K562 (cell line): ENCODE measurements at regions of chr2 and their contacts with region 1.

Region 1: GRCh38 chr2:160109936-160110673 is 47.7 kb upstream of the PLA2R1 start:
- DNase-seq: peak; percentile 50 to 64 (median 61)
- ATAC-seq: peak; percentile 95
- H3K4me3 ChIP-seq: no peak overlapping the region
- H3K27ac ChIP-seq: no peak overlapping the region
- H3K4me1 ChIP-seq: no peaks in the 10 kb centered on the region
- H3K27me3 ChIP-seq: no peaks in the 10 kb centered on the region
- CTCF ChIP-seq: peak; percentile 64 to 85 (median 77)
- EP300 ChIP-seq: no peak
- POLR2A ChIP-seq: no peak
- RAD21 ChIP-seq: peak; percentile 73 to 75

Region 2: DNA sequence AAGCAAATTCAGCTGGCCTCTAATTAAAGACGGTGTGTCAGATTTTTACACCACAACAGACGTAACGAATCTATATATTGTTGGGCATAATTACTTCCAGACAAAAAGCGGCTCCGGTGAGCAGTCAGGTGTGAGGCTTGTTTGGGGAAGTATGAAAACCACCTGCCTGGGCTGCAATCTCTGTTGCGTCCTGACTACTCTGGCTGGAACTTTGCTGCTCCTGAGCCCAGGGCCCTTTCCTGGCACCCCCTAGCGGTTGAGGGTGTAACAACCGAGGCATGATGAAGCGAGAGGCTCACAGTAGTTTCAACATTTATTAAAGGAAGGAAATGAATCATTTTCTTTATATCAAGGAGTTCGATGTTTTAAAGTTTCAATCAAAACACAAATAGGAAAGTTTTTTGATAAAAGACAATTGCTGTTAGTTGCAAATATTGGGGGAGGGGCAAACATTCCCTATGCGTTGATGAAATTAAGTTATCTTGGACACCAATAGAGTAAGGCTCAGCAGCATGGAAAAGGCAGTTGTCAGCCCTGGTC is 100.6 kb after region 1 on chr2:
- CTCF ChIA-PET with region 1: interaction called, 3 read pairs
- POLR2A ChIA-PET with region 1: no interaction called
- in situ Hi-C with region 1: no loop called
- intact Hi-C with region 1: loop called (anchors 1 kb)
- DNase-seq: peak; percentile 67 to 81 (median 75)
- ATAC-seq: peak; percentile 99
- H3K4me3 ChIP-seq: no peak overlapping the region
- H3K27ac ChIP-seq: no peak overlapping the region
- H3K4me1 ChIP-seq: no peaks in the 10 kb centered on the region
- H3K27me3 ChIP-seq: 0 out of 5 replicates have a peak, but pooled peaks cover 0 to 5% of the 10 kb centered on the region in 2 experiments
- CTCF ChIP-seq: peak; percentile 74 to 90 (median 82)
- EP300 ChIP-seq: no peak
- POLR2A ChIP-seq: no peak
- RAD21 ChIP-seq: peak; percentile 48 to 60